Endothelial cell of umbilical vein (primary cell): ENCODE measurements at regions of chr1 and their contacts with region 1.

Region 1: GRCh38 chr1:189987509-189987908 is 490.2 kb downstream of the BRINP3 start:
- DNase-seq: no peak
- H3K4me3 ChIP-seq: no peak overlapping the region
- H3K27ac ChIP-seq: no peak overlapping the region
- H3K4me1 ChIP-seq: no peaks in the 10 kb centered on the region
- H3K27me3 ChIP-seq: no peaks in the 10 kb centered on the region
- CTCF ChIP-seq: no peak
- POLR2A ChIP-seq: no peak

Region 2: GRCh38 chr1:189939967-189940366 is 47.5 kb before region 1 on chr1:
- CTCF ChIA-PET with region 1: no interaction called
- POLR2A ChIA-PET with region 1: no interaction called
- dilution Hi-C with region 1: no loop called
- intact Hi-C with region 1: loop called (anchors 1 kb)
- DNase-seq: no peak
- H3K4me3 ChIP-seq: no peak overlapping the region
- H3K27ac ChIP-seq: no peak overlapping the region
- H3K4me1 ChIP-seq: no peaks in the 10 kb centered on the region
- H3K27me3 ChIP-seq: no peaks in the 10 kb centered on the region
- CTCF ChIP-seq: no peak
- POLR2A ChIP-seq: no peak